ENCODE measurements at regions of chr9 and their contacts with region 1.

Region 1: DNA sequence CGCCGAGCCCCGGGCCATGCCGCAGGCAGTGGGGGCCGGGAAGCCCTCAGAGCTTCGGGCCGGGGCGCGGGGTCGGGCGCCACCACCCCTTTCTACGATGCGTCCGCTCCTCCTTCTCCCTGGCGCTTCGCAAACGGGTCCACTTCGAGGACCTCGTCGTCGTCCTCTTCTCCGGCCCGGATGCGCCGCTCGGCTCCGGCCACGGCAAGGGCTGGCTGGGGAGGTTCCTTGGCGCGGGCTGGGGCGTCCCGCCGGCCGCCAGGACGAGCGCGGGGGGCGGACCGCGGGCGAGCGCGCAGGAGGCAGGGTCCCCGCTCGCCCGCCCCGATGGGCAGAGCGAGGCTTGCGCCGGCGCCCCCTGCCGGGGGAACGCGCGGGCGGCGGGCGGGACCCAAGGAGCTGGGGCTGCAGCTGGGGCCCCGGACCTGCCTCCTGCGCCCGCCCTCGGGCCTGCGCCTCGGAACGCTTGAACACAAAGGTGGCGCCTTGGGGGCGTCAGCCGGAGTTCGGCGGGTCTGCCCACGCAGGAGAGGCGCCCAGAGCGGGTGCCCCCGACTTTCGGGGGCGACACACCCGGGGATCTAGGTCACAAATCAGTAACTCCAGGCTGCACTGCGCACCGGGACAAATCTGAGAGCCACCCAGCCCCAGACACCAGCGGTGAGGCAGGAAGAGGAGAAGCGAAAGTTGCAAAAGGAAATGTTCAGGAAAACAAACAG is at the start of gene ROR2:
- DNase-seq: no peak
- H3K4me3 ChIP-seq: peak within 1 kb of the TSS; percentile 67 to 85 (median 76)
- H3K27ac ChIP-seq: peak within 1 kb of the TSS; percentile 92 to 95 (median 94)
- H3K4me1 ChIP-seq: peaks cover 15 to 66% (median 58%) of the 10 kb centered on the region in 4 donors
- H3K27me3 ChIP-seq: peaks cover 0 to 30% (median 1%) of the 10 kb centered on the region in 4 donors
- CTCF ChIP-seq: peak; percentile 71 to 84 (median 83)
- EP300 ChIP-seq: no peak
- POLR2A ChIP-seq: no peak
- total RNA-seq, gene ROR2: 37.4 to 71.8 (median 59.4) TPM

Region 2: DNA sequence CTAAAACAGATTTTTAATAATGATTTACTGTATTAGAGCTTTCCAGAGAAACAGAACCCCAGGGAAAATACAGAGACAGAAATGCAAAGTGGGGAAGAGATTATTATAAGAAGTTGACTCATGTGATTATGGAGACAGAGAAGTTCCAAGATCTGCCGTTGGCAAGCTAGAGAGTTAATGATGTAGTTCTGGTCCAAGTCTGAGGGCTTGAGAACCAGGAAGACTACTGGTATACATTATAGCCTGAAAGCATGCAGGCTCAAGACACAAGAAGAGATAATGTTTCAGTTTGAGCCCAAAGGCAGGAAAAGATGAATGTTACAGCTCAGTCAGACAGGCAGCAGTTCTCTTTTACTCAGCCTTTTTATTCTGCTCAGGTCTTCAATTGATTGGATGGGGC is 427.6 kb before region 1 on chr9:
- intact Hi-C with region 1: no loop called
- DNase-seq: peak; percentile 66
- H3K4me3 ChIP-seq: no peak overlapping the region
- H3K27ac ChIP-seq: no peak overlapping the region
- H3K4me1 ChIP-seq: no peaks in the 10 kb centered on the region
- H3K27me3 ChIP-seq: no peaks in the 10 kb centered on the region
- CTCF ChIP-seq: no peak
- EP300 ChIP-seq: no peak
- POLR2A ChIP-seq: no peak

Region 3: DNA sequence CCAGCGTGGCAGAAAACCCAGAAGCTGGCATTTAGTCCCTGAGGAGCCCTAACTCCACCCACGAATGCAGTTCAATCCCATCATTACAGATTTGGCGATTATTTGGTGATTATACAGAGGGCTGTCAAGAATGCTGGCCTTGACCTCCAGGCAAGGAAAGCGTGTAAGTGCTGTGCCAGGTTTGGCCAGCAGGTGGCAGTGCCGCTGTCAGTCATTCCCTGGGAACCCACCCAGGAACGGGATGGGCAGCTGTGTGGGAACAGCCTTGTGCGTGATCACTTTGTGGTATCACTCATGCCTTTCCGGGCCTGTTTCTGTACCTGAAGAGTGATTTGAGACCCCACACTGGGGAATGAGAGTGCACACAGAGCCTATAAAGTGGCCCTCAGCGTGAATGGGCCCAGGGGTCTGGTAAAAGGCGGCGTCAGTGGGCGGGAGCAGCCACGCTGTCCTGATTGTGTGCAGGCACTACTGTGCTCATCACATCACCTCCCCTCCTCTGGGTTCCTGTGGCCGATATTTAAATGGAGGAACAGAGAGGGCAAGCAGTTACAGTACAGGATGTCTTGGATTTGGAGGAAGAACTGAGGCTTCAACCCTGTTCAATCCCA is 215.6 kb before region 1 on chr9:
- intact Hi-C with region 1: loop called (anchors 2 kb)
- DNase-seq: no peak
- H3K4me3 ChIP-seq: no peak overlapping the region
- H3K27ac ChIP-seq: peak overlapping the region in 3 of 4 donors; percentile 30 to 45 (median 42)
- H3K4me1 ChIP-seq: peaks cover 4 to 14% (median 14%) of the 10 kb centered on the region in 4 donors
- H3K27me3 ChIP-seq: no peaks in the 10 kb centered on the region
- CTCF ChIP-seq: peak; percentile 89 to 96 (median 93)
- EP300 ChIP-seq: no peak
- POLR2A ChIP-seq: no peak

Region 4: DNA sequence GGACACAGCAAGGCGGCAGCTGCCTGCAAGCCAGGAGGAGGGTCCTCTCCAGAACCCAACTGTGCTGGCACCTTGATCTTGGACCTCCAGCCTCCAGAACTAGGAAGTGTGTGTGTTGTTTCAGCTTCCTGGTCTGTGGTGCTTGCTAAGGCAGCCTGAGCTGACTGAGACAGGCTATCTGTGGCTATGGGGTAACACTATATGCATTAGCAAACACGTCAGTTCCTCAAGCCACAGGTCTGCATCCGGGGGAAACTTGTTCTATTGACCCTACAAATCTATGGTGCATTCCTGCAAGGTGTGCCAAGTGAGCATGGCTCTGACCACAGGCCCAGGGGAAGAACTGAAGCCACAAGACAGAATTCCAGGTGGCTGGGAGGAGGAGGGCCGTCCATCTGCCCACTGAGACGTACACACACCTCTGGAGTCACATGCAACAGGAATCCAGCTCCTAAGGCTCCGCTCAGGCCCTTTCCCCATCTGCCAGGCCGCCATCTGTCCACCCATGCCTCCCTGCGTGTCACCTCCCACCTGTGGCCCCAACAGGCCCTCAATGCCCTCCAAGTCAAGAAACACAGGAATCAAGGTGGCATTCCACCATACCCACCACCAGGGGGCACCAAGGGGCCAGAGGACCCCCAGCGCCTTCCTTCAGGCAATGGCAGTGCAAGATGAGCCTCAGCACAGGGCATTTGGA is 174.9 kb before region 1 on chr9:
- intact Hi-C with region 1: loop called (anchors 1 kb)
- DNase-seq: no peak
- H3K4me3 ChIP-seq: no peak overlapping the region
- H3K27ac ChIP-seq: peak overlapping the region in 1 of 4 donors; percentile 54
- H3K4me1 ChIP-seq: peaks cover 0 to 81% (median 72%) of the 10 kb centered on the region in 4 donors
- H3K27me3 ChIP-seq: no peaks in the 10 kb centered on the region
- CTCF ChIP-seq: peak; percentile 77 to 87 (median 78)
- EP300 ChIP-seq: no peak
- POLR2A ChIP-seq: no peak

Region 5: DNA sequence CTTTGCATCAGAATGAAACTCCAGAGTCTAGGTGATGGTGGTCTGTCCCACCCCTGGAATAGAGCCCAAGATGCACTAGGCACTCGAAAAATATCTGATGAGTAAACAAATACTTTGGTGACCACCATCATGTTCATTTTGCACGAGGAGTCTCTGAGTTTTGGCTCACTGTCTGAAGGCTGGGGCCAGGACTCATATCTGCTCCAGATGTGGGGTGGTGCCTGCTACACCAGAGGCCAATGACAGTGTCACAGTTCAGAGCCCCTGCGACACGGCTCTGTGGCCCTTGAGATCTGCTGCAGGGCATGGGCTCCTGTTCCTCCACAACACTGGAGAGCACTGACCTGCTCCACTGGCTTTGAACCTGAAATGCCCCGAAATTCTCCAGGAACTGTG is 164.7 kb before region 1 on chr9:
- intact Hi-C with region 1: no loop called
- DNase-seq: no peak
- H3K4me3 ChIP-seq: no peak overlapping the region
- H3K27ac ChIP-seq: peak overlapping the region in 2 of 4 donors; percentile 69 to 78
- H3K4me1 ChIP-seq: peaks cover 0 to 64% (median 61%) of the 10 kb centered on the region in 4 donors
- H3K27me3 ChIP-seq: no peaks in the 10 kb centered on the region
- CTCF ChIP-seq: no peak
- EP300 ChIP-seq: no peak
- POLR2A ChIP-seq: no peak

Region 6: DNA sequence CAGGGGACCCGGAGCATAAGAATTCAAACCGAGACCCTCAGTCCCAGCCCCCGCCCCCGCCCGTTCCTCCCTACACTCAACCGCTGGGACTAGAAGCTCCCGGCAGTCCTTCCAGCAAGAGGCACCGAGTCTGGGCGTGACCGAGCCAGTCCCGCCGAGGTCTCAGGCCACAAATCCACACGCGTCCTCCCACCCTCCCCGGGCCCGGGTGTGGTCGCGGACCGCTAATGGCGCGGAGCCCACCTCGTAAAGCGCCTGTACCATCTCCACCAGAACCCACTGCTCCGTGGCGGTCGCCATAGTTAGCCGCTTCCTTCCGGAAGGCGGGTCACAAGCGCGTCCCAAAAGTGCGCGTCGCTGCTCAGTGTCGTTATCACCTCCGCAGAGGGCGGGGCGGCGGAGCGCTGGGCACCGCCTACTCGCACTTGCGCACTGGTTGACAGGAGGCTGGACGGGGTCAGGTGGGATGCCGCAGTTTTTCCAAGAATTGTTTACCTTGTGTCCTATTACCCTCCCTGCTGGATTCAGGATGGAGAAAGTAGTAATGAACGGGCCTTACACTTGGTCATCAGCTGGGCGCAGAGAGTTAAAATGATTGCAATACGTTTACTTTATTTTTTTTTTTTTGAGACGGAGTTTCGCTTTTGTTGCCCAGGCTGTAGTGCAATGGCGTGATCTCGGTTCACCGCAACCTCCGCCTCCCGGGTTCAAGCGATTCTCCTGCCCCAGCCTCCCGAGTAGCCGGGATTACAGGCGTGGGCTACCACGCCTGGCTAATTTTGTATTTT is 165.2 kb after region 1 on chr9 and contains the start of gene SPTLC1:
- intact Hi-C with region 1: loop called (anchors 10 kb)
- DNase-seq: peak; percentile 99
- H3K4me3 ChIP-seq: peak within 1 kb of the TSS; percentile 70 to 82 (median 80)
- H3K27ac ChIP-seq: peak within 1 kb of the TSS; percentile 85 to 91 (median 86)
- H3K4me1 ChIP-seq: peaks cover 12 to 29% (median 24%) of the 10 kb centered on the region in 4 donors
- H3K27me3 ChIP-seq: no peaks in the 10 kb centered on the region
- CTCF ChIP-seq: peak in 1 of 3 experiments; percentile 43
- EP300 ChIP-seq: no peak
- POLR2A ChIP-seq: peak; percentile 84
- total RNA-seq, gene SPTLC1: 50.0 to 57.8 (median 52.5) TPM

Measured in esophagus muscularis mucosa (tissue), 4 donors.